Posterior vena cava (tissue), 2 donors: ENCODE measurements at regions of chr2 and their contacts with region 1.

Region 1: GRCh38 chr2:201383156-201383555 is 26.0 kb upstream of the FLACC1 start:
- DNase-seq: no peak

Region 2: GRCh38 chr2:201432038-201432620 is 49.0 kb after region 1 on chr2:
- intact Hi-C with region 1: no loop called
- DNase-seq: no peak

Region 3: DNA sequence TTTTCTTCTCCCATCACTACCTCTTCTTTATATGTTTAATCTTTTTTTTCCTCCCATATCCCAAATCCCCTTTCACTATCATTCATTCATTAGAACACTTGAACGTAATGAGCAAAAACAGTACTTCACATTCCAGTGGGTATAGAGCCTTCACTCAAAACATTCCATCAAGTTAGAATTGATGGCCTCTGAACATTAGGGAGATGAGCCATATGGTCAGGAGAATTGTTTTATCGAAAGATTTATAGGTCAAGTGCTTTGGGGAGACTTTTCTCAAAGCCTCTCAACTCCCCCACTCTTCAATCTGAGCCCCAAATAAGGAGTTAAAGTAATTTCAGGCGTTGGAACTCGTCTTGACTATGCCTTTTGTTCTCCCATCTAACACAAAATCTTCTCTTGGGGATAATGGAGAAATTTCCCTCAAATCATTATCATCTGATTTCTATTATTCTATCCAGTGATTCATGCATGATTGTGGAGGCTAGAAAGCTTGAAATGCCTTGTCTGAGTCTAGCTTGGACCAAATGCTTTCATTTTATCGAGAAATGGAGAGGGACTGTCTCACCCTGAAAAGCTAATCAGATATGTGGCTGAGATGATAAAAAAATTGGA is 769.1 kb after region 1 on chr2:
- intact Hi-C with region 1: loop called in 1 of 2 experiments (anchors 5 kb)
- DNase-seq: no peak